GM12878 (cell line): ENCODE measurements at regions of chr6 and their contacts with region 1.

Region 1: DNA sequence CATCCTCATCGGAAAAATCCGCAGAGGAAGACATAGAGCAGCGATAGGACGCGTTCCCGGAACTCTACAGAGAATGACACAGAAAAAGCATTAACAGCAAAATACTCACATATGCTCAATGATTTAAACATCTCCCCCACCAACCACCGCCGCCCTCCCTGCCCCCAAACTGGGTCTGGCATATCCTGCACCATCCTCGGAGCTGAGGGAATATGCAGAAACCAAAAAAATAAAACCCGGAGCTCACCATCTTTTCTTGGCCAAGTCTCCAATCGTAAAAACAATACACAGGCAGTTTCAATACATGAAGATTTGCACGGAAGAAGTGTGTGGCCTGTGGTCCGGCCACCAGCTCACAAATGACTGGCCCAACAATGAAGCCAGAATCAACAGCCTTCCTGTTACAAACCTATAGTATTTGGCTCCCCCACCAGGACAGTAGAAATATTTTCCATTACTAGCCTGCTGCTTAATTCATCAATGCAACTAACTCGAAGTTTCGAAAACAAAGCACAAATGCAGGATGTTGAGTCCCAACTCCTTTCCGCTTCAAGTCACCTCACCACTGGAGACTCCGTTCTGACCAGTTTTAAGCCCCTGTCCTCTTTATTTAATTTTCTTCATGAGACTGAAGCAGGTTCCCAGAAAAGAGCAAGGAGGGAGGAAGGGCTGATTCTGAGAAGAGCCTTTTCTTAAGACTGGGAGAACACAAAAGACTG is 103.2 kb upstream of the BEND6 start:
- DNase-seq: peak; percentile 89
- ATAC-seq: peak; percentile 89
- H3K4me3 ChIP-seq: peak overlapping the region; percentile 100
- H3K27ac ChIP-seq: peak overlapping the region; percentile 82
- H3K4me1 ChIP-seq: peaks cover 26% of the 10 kb centered on the region
- H3K27me3 ChIP-seq: no peaks in the 10 kb centered on the region
- CTCF ChIP-seq: peak; percentile 57 to 84 (median 78)
- EP300 ChIP-seq: peak in 1 of 2 experiments; percentile 68; a peak in 2 of 4 replicates
- POLR2A ChIP-seq: no peak
- RAD21 ChIP-seq: peak; percentile 90

Region 2: GRCh38 chr6:56542364-56543331 is 309.1 kb before region 1 on chr6:
- CTCF ChIA-PET with region 1: interaction called, 12 read pairs
- POLR2A ChIA-PET with region 1: no interaction called
- RAD21 ChIA-PET with region 1: interaction called, 8 read pairs
- SMC1A ChIA-PET with region 1: no interaction called
- in situ Hi-C with region 1: no loop called
- intact Hi-C with region 1: loop called (anchors 5 kb)
- DNase-seq: peak; percentile 91
- ATAC-seq: peak; percentile 93
- H3K4me3 ChIP-seq: peak overlapping the region; percentile 73
- H3K27ac ChIP-seq: peak overlapping the region; percentile 70
- H3K4me1 ChIP-seq: peaks cover 13% of the 10 kb centered on the region; the same call in 1 of the 2 replicates
- H3K27me3 ChIP-seq: no peaks in the 10 kb centered on the region
- CTCF ChIP-seq: peak in 2 of 3 experiments; percentile 6 to 11; a peak in 2 of 6 replicates
- EP300 ChIP-seq: 0 out of 4 replicates have a peak, but pooled peaks of 1 of the 2 experiments have one; percentile 7
- POLR2A ChIP-seq: peak; percentile 90
- RAD21 ChIP-seq: no peak

Region 3: GRCh38 chr6:56693246-56693607 is 158.5 kb before region 1 on chr6:
- CTCF ChIA-PET with region 1: interaction called, 40 read pairs
- POLR2A ChIA-PET with region 1: no interaction called
- RAD21 ChIA-PET with region 1: interaction called, 37 read pairs
- SMC1A ChIA-PET with region 1: interaction called, 17 read pairs
- in situ Hi-C with region 1: no loop called
- intact Hi-C with region 1: no loop called
- DNase-seq: no peak
- ATAC-seq: no peak
- H3K4me3 ChIP-seq: no peak overlapping the region
- H3K27ac ChIP-seq: no peak overlapping the region
- H3K4me1 ChIP-seq: peaks cover 12% of the 10 kb centered on the region
- H3K27me3 ChIP-seq: no peaks in the 10 kb centered on the region
- CTCF ChIP-seq: no peak
- EP300 ChIP-seq: no peak
- POLR2A ChIP-seq: no peak
- RAD21 ChIP-seq: no peak

Region 4: GRCh38 chr6:56714982-56715456 is 136.7 kb before region 1 on chr6:
- CTCF ChIA-PET with region 1: interaction called, 468 read pairs
- POLR2A ChIA-PET with region 1: interaction called, 21 read pairs
- RAD21 ChIA-PET with region 1: interaction called, 276 read pairs
- SMC1A ChIA-PET with region 1: interaction called, 315 read pairs
- in situ Hi-C with region 1: loop called (anchors 5 kb)
- intact Hi-C with region 1: no loop called
- DNase-seq: no peak
- ATAC-seq: no peak
- H3K4me3 ChIP-seq: no peak overlapping the region
- H3K27ac ChIP-seq: no peak overlapping the region
- H3K4me1 ChIP-seq: peaks cover 18% of the 10 kb centered on the region
- H3K27me3 ChIP-seq: no peaks in the 10 kb centered on the region
- CTCF ChIP-seq: no peak
- EP300 ChIP-seq: no peak
- POLR2A ChIP-seq: no peak
- RAD21 ChIP-seq: no peak

Region 5: GRCh38 chr6:56772737-56773184 is 78.9 kb before region 1 on chr6:
- CTCF ChIA-PET with region 1: interaction called, 494 read pairs
- POLR2A ChIA-PET with region 1: interaction called, 20 read pairs
- RAD21 ChIA-PET with region 1: interaction called, 450 read pairs
- SMC1A ChIA-PET with region 1: interaction called, 358 read pairs
- in situ Hi-C with region 1: no loop called
- intact Hi-C with region 1: loop called (anchors 2 kb)
- DNase-seq: no peak
- ATAC-seq: peak; percentile 53
- H3K4me3 ChIP-seq: no peak overlapping the region
- H3K27ac ChIP-seq: no peak overlapping the region
- H3K4me1 ChIP-seq: peaks cover 41% of the 10 kb centered on the region
- H3K27me3 ChIP-seq: no peaks in the 10 kb centered on the region
- CTCF ChIP-seq: 0 out of 6 replicates have a peak, but pooled peaks of 2 of the 3 experiments have one; percentile 10 to 16
- EP300 ChIP-seq: no peak
- POLR2A ChIP-seq: no peak
- RAD21 ChIP-seq: peak; percentile 25; the same call in 1 of the 2 replicates

Region 6: GRCh38 chr6:56821005-56821432 is 30.7 kb before region 1 on chr6:
- CTCF ChIA-PET with region 1: interaction called, 4 read pairs
- POLR2A ChIA-PET with region 1: no interaction called
- RAD21 ChIA-PET with region 1: interaction called, 9 read pairs
- SMC1A ChIA-PET with region 1: interaction called, 15 read pairs
- in situ Hi-C with region 1: no loop called
- intact Hi-C with region 1: no loop called
- DNase-seq: no peak
- ATAC-seq: peak; percentile 47
- H3K4me3 ChIP-seq: no peak overlapping the region
- H3K27ac ChIP-seq: no peak overlapping the region
- H3K4me1 ChIP-seq: peaks cover 6% of the 10 kb centered on the region; the same call in 1 of the 2 replicates
- H3K27me3 ChIP-seq: no peaks in the 10 kb centered on the region
- CTCF ChIP-seq: no peak
- EP300 ChIP-seq: no peak
- POLR2A ChIP-seq: no peak
- RAD21 ChIP-seq: no peak

Region 7: DNA sequence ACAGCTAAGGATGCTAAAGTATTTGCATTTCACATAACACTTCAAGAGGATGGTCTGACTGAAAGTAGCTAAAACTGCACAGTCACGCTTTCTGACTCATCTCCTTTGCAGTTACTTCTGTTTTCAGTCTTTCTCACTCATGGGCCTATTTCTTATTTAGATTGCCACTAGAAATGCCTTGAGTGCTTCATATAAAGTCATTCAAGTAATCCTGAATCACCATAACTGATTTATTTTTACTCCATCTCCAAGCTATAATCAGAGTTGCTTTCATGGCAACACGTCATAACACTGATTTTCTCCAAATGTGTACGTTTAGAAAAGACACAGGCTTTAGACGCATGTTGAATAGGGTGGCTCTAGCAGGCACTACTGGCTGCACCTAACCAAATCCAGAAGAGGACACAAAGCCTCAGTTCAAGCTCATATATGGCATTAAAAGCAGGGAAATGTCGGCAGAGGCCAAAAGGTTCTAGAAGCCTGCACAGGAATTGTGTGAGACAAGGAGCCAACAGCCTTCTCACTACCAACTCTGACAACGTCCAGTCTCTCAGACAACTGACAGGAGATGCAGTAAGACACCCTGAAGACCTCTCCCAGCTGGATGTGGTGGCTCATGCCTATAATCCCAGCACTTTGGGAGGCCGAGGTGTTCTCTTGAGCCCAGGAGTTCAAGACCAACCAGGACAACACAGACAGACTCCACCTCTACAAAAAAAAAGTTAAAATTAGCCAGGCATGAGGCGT is 39.2 kb after region 1 on chr6:
- CTCF ChIA-PET with region 1: interaction called, 14 read pairs
- POLR2A ChIA-PET with region 1: no interaction called
- RAD21 ChIA-PET with region 1: interaction called, 24 read pairs
- SMC1A ChIA-PET with region 1: interaction called, 25 read pairs
- in situ Hi-C with region 1: no loop called
- intact Hi-C with region 1: no loop called
- DNase-seq: peak; percentile 92
- ATAC-seq: peak; percentile 94
- H3K4me3 ChIP-seq: peak overlapping the region; percentile 43; the same call in 1 of the 2 replicates
- H3K27ac ChIP-seq: peak overlapping the region; percentile 95
- H3K4me1 ChIP-seq: peaks cover 30% of the 10 kb centered on the region
- H3K27me3 ChIP-seq: no peaks in the 10 kb centered on the region
- CTCF ChIP-seq: no peak
- EP300 ChIP-seq: peak; percentile 78 to 86; a peak in 3 of 4 replicates
- POLR2A ChIP-seq: no peak
- RAD21 ChIP-seq: no peak